B cell (primary cell): ENCODE measurements at regions of chr16 and their contacts with region 1.

Region 1: DNA sequence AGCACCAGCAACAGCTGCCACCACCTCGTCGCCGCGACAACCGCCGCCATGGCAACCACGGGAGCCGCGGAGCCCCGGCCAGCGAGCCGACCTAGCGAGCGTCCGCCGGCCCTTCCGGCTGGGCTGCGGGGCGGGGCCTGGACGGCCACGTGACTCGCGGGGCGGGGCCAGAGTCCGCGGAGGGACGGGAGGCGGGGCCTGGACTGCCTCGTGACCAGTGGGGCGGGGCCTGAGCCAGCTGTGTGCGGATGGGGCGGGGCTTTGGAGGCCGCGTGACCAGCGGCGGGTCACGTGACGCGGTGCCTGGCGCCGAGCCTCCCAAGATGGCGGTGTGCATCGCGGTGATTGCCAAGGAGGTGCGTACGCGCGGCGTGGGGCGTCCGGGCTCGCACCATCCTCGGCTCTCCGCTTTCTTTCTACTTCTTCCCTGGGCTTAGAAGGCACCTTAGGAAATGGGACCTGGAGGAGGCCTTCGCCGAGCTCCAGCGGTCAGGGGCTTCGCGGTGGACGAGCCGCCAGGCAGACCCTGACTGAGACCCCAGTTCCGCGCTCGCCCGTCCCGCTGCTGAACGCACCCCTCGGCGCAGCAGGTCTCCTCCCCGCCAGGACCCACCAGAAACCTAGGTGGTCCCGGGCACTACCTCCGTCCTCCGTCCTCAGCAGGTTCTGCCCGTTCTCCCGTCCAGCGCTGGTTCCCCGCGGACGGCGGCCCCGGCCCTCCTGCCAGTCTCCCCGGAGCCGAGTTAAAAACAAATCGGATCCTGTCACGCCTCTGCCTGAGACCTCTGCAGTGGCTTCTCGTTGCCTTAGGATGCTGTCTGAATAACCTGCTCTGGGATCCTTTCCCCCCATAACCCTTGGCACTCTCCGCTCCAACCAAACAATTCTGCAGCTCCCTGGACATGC is at the starts of genes GALNS and TRAPPC2L:
- DNase-seq: peak; percentile 97
- ATAC-seq: peak; percentile 91
- H3K4me3 ChIP-seq: peak within 1 kb of the TSS; percentile 80 to 98 (median 93)
- H3K4me3 Mint-ChIP-seq: peak within 1 kb of the TSS; percentile 97
- H3K27ac ChIP-seq: peak within 1 kb of the TSS; percentile 63 to 84
- H3K27ac Mint-ChIP-seq: peak within 1 kb of the TSS; percentile 94
- H3K4me1 ChIP-seq: peaks cover 30 to 36% of the 10 kb centered on the region in 2 donors
- H3K4me1 Mint-ChIP-seq: peaks cover 38% of the 10 kb centered on the region
- H3K27me3 ChIP-seq: no peaks in the 10 kb centered on the region
- H3K27me3 Mint-ChIP-seq: no peaks in the 10 kb centered on the region
- CTCF ChIP-seq: no peak
- total RNA-seq, gene GALNS: 68.4 and 81.3 TPM in 2 replicates
- total RNA-seq, gene TRAPPC2L: 55.5 and 65.1 TPM in 2 replicates

Region 2: DNA sequence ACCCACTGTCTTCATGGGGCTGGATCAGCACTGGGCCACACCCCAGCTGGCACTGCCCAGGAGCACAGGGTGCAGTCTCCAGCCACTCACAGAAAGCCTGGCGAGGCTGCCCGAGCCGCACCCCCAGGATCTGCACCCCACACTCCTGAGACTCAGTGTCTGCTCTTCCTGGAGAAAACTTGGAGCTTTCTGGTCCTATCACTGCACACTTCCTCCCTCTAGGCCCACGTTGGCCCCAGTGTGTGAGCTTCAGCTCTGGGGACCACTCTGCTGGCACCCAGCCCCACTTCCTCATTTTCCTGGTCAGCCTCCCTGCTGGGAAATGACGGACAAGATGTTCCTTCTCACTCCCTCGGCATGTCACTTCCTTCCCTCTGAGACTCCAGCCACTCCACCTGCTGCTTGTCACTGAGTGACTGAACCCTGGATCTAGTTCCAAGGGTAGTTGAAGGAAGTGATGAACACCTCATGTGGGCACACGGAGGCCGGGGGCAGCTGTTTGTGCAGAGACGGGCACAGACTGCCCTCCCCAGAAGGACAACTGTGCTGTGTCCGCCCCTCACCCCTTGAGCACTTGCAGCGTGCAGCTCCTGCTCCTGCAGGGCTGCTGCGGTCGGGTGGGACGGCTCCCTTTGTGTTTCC is 257.9 kb before region 1 on chr16:
- CTCF ChIA-PET with region 1: no interaction called
- POLR2A ChIA-PET with region 1: no interaction called
- intact Hi-C with region 1: no loop called
- DNase-seq: no peak
- ATAC-seq: no peak
- H3K4me3 ChIP-seq: no peak overlapping the region
- H3K4me3 Mint-ChIP-seq: no peak overlapping the region
- H3K27ac ChIP-seq: no peak overlapping the region
- H3K27ac Mint-ChIP-seq: no peak overlapping the region
- H3K4me1 ChIP-seq: no peaks in the 10 kb centered on the region
- H3K4me1 Mint-ChIP-seq: peaks cover 2% of the 10 kb centered on the region
- H3K27me3 ChIP-seq: no peaks in the 10 kb centered on the region
- H3K27me3 Mint-ChIP-seq: no peaks in the 10 kb centered on the region
- CTCF ChIP-seq: no peak

Region 3: GRCh38 chr16:88803264-88803987 is 53.7 kb before region 1 on chr16 and contains the start of gene CDT1:
- CTCF ChIA-PET with region 1: no interaction called
- POLR2A ChIA-PET with region 1: no interaction called
- intact Hi-C with region 1: loop called (anchors 2 kb)
- DNase-seq: peak; percentile 92
- ATAC-seq: peak; percentile 68
- H3K4me3 ChIP-seq: peak within 1 kb of the TSS; percentile 52 to 81 (median 77)
- H3K4me3 Mint-ChIP-seq: peak within 1 kb of the TSS; percentile 86
- H3K27ac ChIP-seq: peak within 1 kb of the TSS; percentile 54 to 67
- H3K27ac Mint-ChIP-seq: peak within 1 kb of the TSS; percentile 87
- H3K4me1 ChIP-seq: peaks cover 26 to 40% of the 10 kb centered on the region in 2 donors
- H3K4me1 Mint-ChIP-seq: peaks cover 21% of the 10 kb centered on the region
- H3K27me3 ChIP-seq: peaks cover 0 to 4% (median 0%) of the 10 kb centered on the region in 4 experiments
- H3K27me3 Mint-ChIP-seq: no peaks in the 10 kb centered on the region
- CTCF ChIP-seq: no peak
- total RNA-seq, gene CDT1: 0.27 and 1.3 TPM in 2 replicates

Region 4: GRCh38 chr16:88811769-88812512 is 45.1 kb before region 1 on chr16 and contains the start of gene APRT:
- CTCF ChIA-PET with region 1: interaction called, 21 read pairs
- POLR2A ChIA-PET with region 1: interaction called, 11 read pairs
- intact Hi-C with region 1: loop called (anchors 1 kb)
- DNase-seq: peak; percentile 97
- ATAC-seq: peak; percentile 87
- H3K4me3 ChIP-seq: peak within 1 kb of the TSS; percentile 45 to 90 (median 77)
- H3K4me3 Mint-ChIP-seq: peak within 1 kb of the TSS; percentile 98
- H3K27ac ChIP-seq: peak within 1 kb of the TSS; percentile 61 to 65
- H3K27ac Mint-ChIP-seq: peak within 1 kb of the TSS; percentile 99
- H3K4me1 ChIP-seq: peaks cover 11 to 27% of the 10 kb centered on the region in 2 donors
- H3K4me1 Mint-ChIP-seq: peaks cover 19% of the 10 kb centered on the region
- H3K27me3 ChIP-seq: no peaks in the 10 kb centered on the region
- H3K27me3 Mint-ChIP-seq: no peaks in the 10 kb centered on the region
- CTCF ChIP-seq: no peak
- total RNA-seq, gene APRT: 111 and 124 TPM in 2 replicates

Region 5: GRCh38 chr16:88925101-88925887 is 68.2 kb after region 1 on chr16:
- CTCF ChIA-PET with region 1: no interaction called
- POLR2A ChIA-PET with region 1: no interaction called
- intact Hi-C with region 1: loop called (anchors 2 kb)
- DNase-seq: peak; percentile 82
- ATAC-seq: peak; percentile 96
- H3K4me3 ChIP-seq: no peak overlapping the region
- H3K4me3 Mint-ChIP-seq: no peak overlapping the region
- H3K27ac ChIP-seq: no peak overlapping the region
- H3K27ac Mint-ChIP-seq: peak overlapping the region; percentile 78
- H3K4me1 ChIP-seq: peaks cover 51 to 63% of the 10 kb centered on the region in 2 donors
- H3K4me1 Mint-ChIP-seq: peaks cover 60% of the 10 kb centered on the region
- H3K27me3 ChIP-seq: no peaks in the 10 kb centered on the region
- H3K27me3 Mint-ChIP-seq: no peaks in the 10 kb centered on the region
- CTCF ChIP-seq: peak; percentile 66